ENCODE measurements at regions of chr22 and their contacts with region 1.

Region 1: DNA sequence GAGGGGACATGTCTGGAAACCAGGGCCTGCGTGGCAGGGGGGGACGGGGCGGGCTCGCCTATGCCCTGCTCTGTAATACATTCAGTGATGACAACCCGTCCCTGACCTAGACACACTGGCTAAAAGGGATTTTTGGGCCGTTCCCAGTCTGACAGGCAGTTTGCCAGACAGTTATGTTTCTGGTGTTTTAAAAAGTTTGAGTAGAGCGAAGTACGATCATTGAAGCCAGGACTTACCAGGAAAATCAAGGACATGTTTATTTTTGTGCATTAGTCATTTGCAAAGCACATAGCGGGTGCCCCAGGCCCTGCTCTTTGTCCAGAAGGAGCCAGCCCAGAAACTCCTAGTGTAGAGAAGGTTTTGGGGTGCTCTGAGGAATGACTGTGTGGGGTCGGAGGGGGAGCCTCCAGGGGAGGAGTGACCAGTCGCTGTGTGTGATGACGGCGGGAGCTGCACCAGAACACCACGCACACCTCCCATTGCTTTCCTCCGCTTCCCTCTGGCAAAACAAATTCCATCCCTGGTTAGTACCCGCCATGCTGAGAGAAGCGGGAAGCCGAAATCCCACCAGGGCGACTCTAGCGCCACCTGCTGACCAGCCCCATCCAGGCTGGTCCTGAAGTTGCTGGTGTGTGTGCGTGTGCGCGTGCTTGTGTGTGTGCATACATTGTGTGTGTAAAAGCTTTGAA is 50.8 kb downstream of the FBLN1 start:
- DNase-seq: peak; percentile 78 to 84
- ATAC-seq: peak; percentile 47 to 81 (median 68)
- H3K4me3 ChIP-seq: no peak overlapping the region
- H3K27ac ChIP-seq: peak overlapping the region; percentile 69 to 86 (median 76)
- H3K4me1 ChIP-seq: peaks cover 5 to 53% (median 35%) of the 10 kb centered on the region in 9 donors
- H3K27me3 ChIP-seq: peaks cover 0 to 4% (median 0%) of the 10 kb centered on the region in 7 donors
- CTCF ChIP-seq: peak; percentile 77 to 95 (median 92)

Region 2: GRCh38 chr22:45441138-45441537 is 112.4 kb before region 1 on chr22:
- intact Hi-C with region 1: loop called (anchors 1 to 2 kb)
- DNase-seq: peak; percentile 44 to 56
- ATAC-seq: peak; percentile 86 to 93 (median 91)
- H3K4me3 ChIP-seq: no peak overlapping the region
- H3K27ac ChIP-seq: no peak overlapping the region
- H3K4me1 ChIP-seq: peaks cover 0 to 6% (median 0%) of the 10 kb centered on the region in 9 donors
- H3K27me3 ChIP-seq: peaks cover 0 to 24% (median 0%) of the 10 kb centered on the region in 7 donors
- CTCF ChIP-seq: peak; percentile 37 to 80 (median 65)

Region 3: DNA sequence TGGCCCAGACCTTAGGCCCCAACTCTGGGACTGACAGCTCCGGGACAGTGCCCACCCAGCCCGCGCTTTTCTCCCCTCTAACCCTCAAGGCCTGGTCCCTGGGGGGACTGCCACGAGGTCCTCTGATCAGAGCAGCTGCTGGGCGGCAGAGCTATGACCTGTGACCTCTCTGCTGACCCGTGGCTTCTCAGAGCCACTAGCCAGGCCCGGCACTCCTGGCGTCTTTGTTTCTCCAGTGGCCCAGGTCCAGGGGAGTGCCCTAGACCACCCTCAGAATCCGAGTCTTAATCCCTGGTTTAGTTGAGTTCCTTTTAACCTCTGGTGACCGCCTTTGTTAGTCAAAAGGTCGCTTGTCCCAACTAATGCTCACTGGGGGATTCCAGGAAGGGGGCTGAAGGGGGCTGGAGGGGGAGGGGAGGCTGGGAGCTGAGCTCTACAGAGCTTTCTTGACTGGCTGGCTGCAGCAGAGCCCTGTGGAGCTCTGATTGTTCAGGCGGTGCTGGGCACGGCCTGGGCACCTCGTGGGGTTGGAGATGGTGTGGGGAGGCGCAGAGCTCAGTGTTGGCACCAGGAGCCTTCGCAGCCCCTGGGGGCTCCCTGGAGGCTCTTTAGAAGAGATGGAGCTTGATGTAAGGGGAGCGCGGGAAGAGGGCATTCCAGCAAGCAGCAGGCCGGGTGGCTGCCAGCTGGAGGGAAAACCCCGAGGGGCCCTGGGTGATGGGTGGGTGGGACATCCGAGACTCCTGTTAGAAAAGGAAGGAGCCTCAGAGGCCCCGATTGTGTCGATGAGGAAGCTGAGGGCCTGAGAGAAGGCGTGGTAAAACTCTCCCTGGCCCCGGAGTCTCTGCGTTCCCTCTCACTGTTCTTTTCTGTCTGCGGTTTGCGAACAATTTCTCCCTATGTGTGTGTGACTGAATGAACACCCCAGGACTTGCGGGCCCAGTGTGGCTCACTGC is 49.4 kb before region 1 on chr22:
- intact Hi-C with region 1: loop called in 1 of 10 experiments (anchors 2 kb)
- DNase-seq: no peak
- ATAC-seq: peak in 1 of 8 donors; percentile 15
- H3K4me3 ChIP-seq: peak overlapping the region; percentile 22 to 64 (median 54)
- H3K27ac ChIP-seq: peak overlapping the region in 9 of 10 donors; percentile 59 to 82 (median 67)
- H3K4me1 ChIP-seq: peaks cover 0 to 32% (median 11%) of the 10 kb centered on the region in 9 donors
- H3K27me3 ChIP-seq: peaks cover 8 to 59% (median 40%) of the 10 kb centered on the region in 7 donors
- CTCF ChIP-seq: no peak

Region 4: GRCh38 chr22:45511847-45512281 is 41.6 kb before region 1 on chr22:
- intact Hi-C with region 1: loop called in 3 of 10 experiments (anchors 2 to 5 kb)
- DNase-seq: peak; percentile 62 to 73
- ATAC-seq: peak; percentile 79 to 92 (median 86)
- H3K4me3 ChIP-seq: no peak overlapping the region
- H3K27ac ChIP-seq: peak overlapping the region; percentile 35 to 79 (median 58)
- H3K4me1 ChIP-seq: peaks cover 3 to 68% (median 29%) of the 10 kb centered on the region in 9 donors
- H3K27me3 ChIP-seq: peaks cover 0 to under 1% (median 0%) of the 10 kb centered on the region in 7 donors
- CTCF ChIP-seq: no peak

Region 5: GRCh38 chr22:45516923-45517675 is 36.4 kb before region 1 on chr22:
- intact Hi-C with region 1: loop called in 2 of 10 experiments (anchors 5 kb)
- DNase-seq: no peak
- ATAC-seq: no peak
- H3K4me3 ChIP-seq: no peak overlapping the region
- H3K27ac ChIP-seq: peak overlapping the region in 1 of 10 donors; percentile 70
- H3K4me1 ChIP-seq: peaks cover 6 to 64% (median 29%) of the 10 kb centered on the region in 9 donors
- H3K27me3 ChIP-seq: no peaks in the 10 kb centered on the region
- CTCF ChIP-seq: no peak

Measured in heart right ventricle (tissue), 16 donors.